Activated T-helper 2 cell treated with anti-CD3 and anti-CD28 coated beads, Interferon-gamma antibody, Interleukin-2, Interleukin-4, amounts not matched to agents 10 μg/mL and 5 μg/mL and 100 μg/mL, durations not matched to agents 14 hours and 24 hours and 36 hours (primary cell): ENCODE measurements at regions of chr6 and their contacts with region 1.

Region 1: GRCh38 chr6:160455541-160456213 is 107.5 kb downstream of the SLC22A3 start:
- DNase-seq: peak; percentile 56
- H3K4me3 Mint-ChIP-seq: no peak overlapping the region
- H3K27ac Mint-ChIP-seq: no peak overlapping the region
- H3K4me1 Mint-ChIP-seq: peaks cover 25% of the 10 kb centered on the region
- H3K27me3 Mint-ChIP-seq: peaks cover 19% of the 10 kb centered on the region

Region 2: GRCh38 chr6:160137989-160138835 is 317.5 kb before region 1 on chr6:
- intact Hi-C with region 1: loop called (anchors 1 kb)
- DNase-seq: peak; percentile 58
- H3K4me3 Mint-ChIP-seq: no peak overlapping the region
- H3K27ac Mint-ChIP-seq: peak overlapping the region; percentile 32
- H3K4me1 Mint-ChIP-seq: peaks cover 7% of the 10 kb centered on the region
- H3K27me3 Mint-ChIP-seq: no peaks in the 10 kb centered on the region

Region 3: GRCh38 chr6:160367798-160368547 is 87.7 kb before region 1 on chr6:
- intact Hi-C with region 1: no loop called
- DNase-seq: no peak
- H3K4me3 Mint-ChIP-seq: no peak overlapping the region
- H3K27ac Mint-ChIP-seq: no peak overlapping the region
- H3K4me1 Mint-ChIP-seq: no peaks in the 10 kb centered on the region
- H3K27me3 Mint-ChIP-seq: no peaks in the 10 kb centered on the region